Mammary epithelial cell (primary cell): ENCODE measurements at regions of chr1 and their contacts with region 1.

Region 1: GRCh38 chr1:241860922-241861321 is 12.9 kb downstream of the EXO1 start:
- DNase-seq: no peak
- H3K4me3 ChIP-seq: no peak overlapping the region
- H3K27ac ChIP-seq: no peak overlapping the region
- H3K4me1 ChIP-seq: no peaks in the 10 kb centered on the region
- H3K27me3 ChIP-seq: no peaks in the 10 kb centered on the region
- CTCF ChIP-seq: no peak

Region 2: GRCh38 chr1:241253466-241253865 is 607.5 kb before region 1 on chr1:
- CTCF ChIA-PET with region 1: no interaction called
- dilution Hi-C with region 1: no loop called
- in situ Hi-C with region 1: no loop called
- intact Hi-C with region 1: no loop called
- DNase-seq: no peak
- H3K4me3 ChIP-seq: no peak overlapping the region
- H3K27ac ChIP-seq: no peak overlapping the region
- H3K4me1 ChIP-seq: no peaks in the 10 kb centered on the region
- H3K27me3 ChIP-seq: no peaks in the 10 kb centered on the region
- CTCF ChIP-seq: no peak

Region 3: GRCh38 chr1:241525026-241525425 is 335.9 kb before region 1 on chr1:
- CTCF ChIA-PET with region 1: no interaction called
- dilution Hi-C with region 1: loop called (anchors 5 kb)
- in situ Hi-C with region 1: no loop called
- intact Hi-C with region 1: no loop called
- DNase-seq: no peak
- H3K4me3 ChIP-seq: no peak overlapping the region
- H3K27ac ChIP-seq: no peak overlapping the region
- H3K4me1 ChIP-seq: no peaks in the 10 kb centered on the region
- H3K27me3 ChIP-seq: no peaks in the 10 kb centered on the region
- CTCF ChIP-seq: no peak

Region 4: GRCh38 chr1:241775021-241775420 is 85.9 kb before region 1 on chr1:
- CTCF ChIA-PET with region 1: no interaction called
- dilution Hi-C with region 1: no loop called
- in situ Hi-C with region 1: no loop called
- intact Hi-C with region 1: no loop called
- DNase-seq: no peak
- H3K4me3 ChIP-seq: no peak overlapping the region
- H3K27ac ChIP-seq: no peak overlapping the region
- H3K4me1 ChIP-seq: no peaks in the 10 kb centered on the region
- H3K27me3 ChIP-seq: no peaks in the 10 kb centered on the region
- CTCF ChIP-seq: no peak

Region 5: GRCh38 chr1:242187816-242188215 is 326.9 kb after region 1 on chr1:
- CTCF ChIA-PET with region 1: no interaction called
- dilution Hi-C with region 1: no loop called
- in situ Hi-C with region 1: no loop called
- intact Hi-C with region 1: no loop called
- DNase-seq: no peak
- H3K4me3 ChIP-seq: no peak overlapping the region
- H3K27ac ChIP-seq: no peak overlapping the region
- H3K4me1 ChIP-seq: no peaks in the 10 kb centered on the region
- H3K27me3 ChIP-seq: no peaks in the 10 kb centered on the region
- CTCF ChIP-seq: no peak